Natural killer cell (primary cell): ENCODE measurements at regions of chr7 and their contacts with region 1.

Region 1: GRCh38 chr7:134646425-134647305 is at the start of gene BPGM:
- DNase-seq: peak; percentile 94 to 100
- ATAC-seq: peak; percentile 94 to 99 (median 97)
- H3K4me3 ChIP-seq: peak within 1 kb of the TSS; percentile 67
- H3K4me3 Mint-ChIP-seq: no peak within 1 kb of the TSS
- H3K27ac ChIP-seq: peak within 1 kb of the TSS; percentile 93
- H3K27ac Mint-ChIP-seq: no peak within 1 kb of the TSS
- H3K4me1 ChIP-seq: peaks cover 24% of the 10 kb centered on the region
- H3K4me1 Mint-ChIP-seq: peaks cover 39 to 44% of the 10 kb centered on the region in 2 donors
- H3K27me3 ChIP-seq: no peaks in the 10 kb centered on the region
- H3K27me3 Mint-ChIP-seq: no peaks in the 10 kb centered on the region
- CTCF ChIP-seq: no peak
- total RNA-seq, gene BPGM: 30.0 to 39.1 (median 31.4) TPM

Region 2: GRCh38 chr7:133081599-133082389 is 1564.9 kb before region 1 on chr7 and contains the start of gene CHCHD3:
- intact Hi-C with region 1: loop called (anchors 10 kb)
- DNase-seq: peak; percentile 91 to 98
- ATAC-seq: peak; percentile 97 to 99 (median 98)
- H3K4me3 ChIP-seq: peak within 1 kb of the TSS; percentile 93
- H3K4me3 Mint-ChIP-seq: peak within 1 kb of the TSS; percentile 93
- H3K27ac ChIP-seq: peak within 1 kb of the TSS; percentile 84
- H3K27ac Mint-ChIP-seq: peak within 1 kb of the TSS; percentile 89 to 94
- H3K4me1 ChIP-seq: peaks cover 8% of the 10 kb centered on the region
- H3K4me1 Mint-ChIP-seq: peaks cover 28 to 36% of the 10 kb centered on the region in 2 donors
- H3K27me3 ChIP-seq: no peaks in the 10 kb centered on the region
- H3K27me3 Mint-ChIP-seq: peaks cover 8 to 13% of the 10 kb centered on the region in 2 donors
- CTCF ChIP-seq: no peak
- total RNA-seq, gene CHCHD3: 35.2 to 41.0 (median 35.9) TPM

Region 3: GRCh38 chr7:134669845-134670373 is 23.2 kb after region 1 on chr7:
- intact Hi-C with region 1: loop called (anchors 2 kb)
- DNase-seq: peak; percentile 26 to 94
- ATAC-seq: peak; percentile 74 to 80 (median 79)
- H3K4me3 ChIP-seq: no peak overlapping the region
- H3K4me3 Mint-ChIP-seq: peak overlapping the region; percentile 69
- H3K27ac ChIP-seq: peak overlapping the region; percentile 35
- H3K27ac Mint-ChIP-seq: peak overlapping the region; percentile 90 to 95
- H3K4me1 ChIP-seq: peaks cover 10% of the 10 kb centered on the region
- H3K4me1 Mint-ChIP-seq: peaks cover 48% of the 10 kb centered on the region in 2 donors
- H3K27me3 ChIP-seq: no peaks in the 10 kb centered on the region
- H3K27me3 Mint-ChIP-seq: no peaks in the 10 kb centered on the region
- CTCF ChIP-seq: no peak

Region 4: GRCh38 chr7:134720091-134720935 is 73.6 kb after region 1 on chr7:
- intact Hi-C with region 1: no loop called
- DNase-seq: no peak
- ATAC-seq: no peak
- H3K4me3 ChIP-seq: no peak overlapping the region
- H3K4me3 Mint-ChIP-seq: no peak overlapping the region
- H3K27ac ChIP-seq: no peak overlapping the region
- H3K27ac Mint-ChIP-seq: no peak overlapping the region
- H3K4me1 ChIP-seq: no peaks in the 10 kb centered on the region
- H3K4me1 Mint-ChIP-seq: no peaks in the 10 kb centered on the region
- H3K27me3 ChIP-seq: no peaks in the 10 kb centered on the region
- H3K27me3 Mint-ChIP-seq: peaks cover 0 to 7% of the 10 kb centered on the region in 2 donors
- CTCF ChIP-seq: no peak

Region 5: GRCh38 chr7:134986363-134987251 is 339.9 kb after region 1 on chr7 and contains the start of gene AGBL3:
- intact Hi-C with region 1: loop called (anchors 10 kb)
- DNase-seq: peak; percentile 81 to 94
- ATAC-seq: peak; percentile 91 to 92 (median 91)
- H3K4me3 ChIP-seq: peak within 1 kb of the TSS; percentile 75
- H3K4me3 Mint-ChIP-seq: peak within 1 kb of the TSS; percentile 98
- H3K27ac ChIP-seq: peak within 1 kb of the TSS; percentile 73
- H3K27ac Mint-ChIP-seq: peak within 1 kb of the TSS; percentile 96 to 99
- H3K4me1 ChIP-seq: no peaks in the 10 kb centered on the region
- H3K4me1 Mint-ChIP-seq: peaks cover 19 to 29% of the 10 kb centered on the region in 2 donors
- H3K27me3 ChIP-seq: no peaks in the 10 kb centered on the region
- H3K27me3 Mint-ChIP-seq: no peaks in the 10 kb centered on the region
- CTCF ChIP-seq: peak; percentile 75
- total RNA-seq, gene AGBL3: 0.99 to 2.3 (median 1.4) TPM